ENCODE measurements at regions of chrX and their contacts with region 1.

Region 1: DNA sequence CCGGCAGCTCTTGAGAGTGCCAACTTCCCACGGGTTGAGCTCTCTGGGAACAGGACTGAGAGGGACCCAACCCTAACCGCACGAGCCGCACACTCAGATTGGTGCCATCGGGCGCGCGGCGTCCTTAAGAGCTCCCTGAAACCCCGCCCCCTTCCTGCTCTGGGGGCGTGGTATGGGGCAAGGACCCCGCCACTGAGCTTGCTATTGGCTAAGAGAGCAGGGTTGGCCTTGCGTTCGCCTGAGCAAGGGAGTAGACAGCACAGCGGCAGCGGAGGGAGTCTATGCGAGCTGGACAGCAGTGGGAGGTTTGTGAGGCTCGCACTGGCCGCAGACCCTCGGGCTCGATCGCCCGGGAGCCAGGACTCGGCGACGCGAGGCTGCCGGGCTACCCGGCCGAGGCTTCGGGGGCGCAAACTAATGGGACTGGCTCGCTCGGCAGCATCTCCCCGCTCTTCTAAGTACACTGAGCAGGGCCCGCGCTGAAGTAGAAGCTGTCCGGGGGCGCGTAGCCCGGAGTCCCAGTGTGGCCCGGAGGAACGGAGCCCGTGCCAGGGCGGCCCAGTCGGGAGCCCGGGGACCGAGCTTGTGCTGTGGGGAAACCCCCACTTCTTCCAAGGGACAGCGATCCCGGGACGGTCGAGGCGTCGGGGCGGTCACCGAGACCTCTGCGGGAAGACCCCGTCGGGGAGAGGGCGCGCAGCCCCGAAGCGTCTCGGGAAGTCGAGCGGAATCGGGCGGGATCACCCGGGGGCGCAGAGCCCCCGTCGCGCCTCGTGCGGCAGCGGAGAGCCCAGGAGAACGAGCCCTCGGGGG is at the start of gene EFNB1:
- DNase-seq: peak; percentile 92
- H3K4me3 ChIP-seq: peak within 1 kb of the TSS; percentile 65
- H3K27ac ChIP-seq: peak within 1 kb of the TSS; percentile 74
- H3K4me1 ChIP-seq: no peaks in the 10 kb centered on the region
- H3K27me3 ChIP-seq: no peaks in the 10 kb centered on the region
- CTCF ChIP-seq: no peak
- total RNA-seq, gene EFNB1: 77.9 to 92.2 TPM

Region 2: DNA sequence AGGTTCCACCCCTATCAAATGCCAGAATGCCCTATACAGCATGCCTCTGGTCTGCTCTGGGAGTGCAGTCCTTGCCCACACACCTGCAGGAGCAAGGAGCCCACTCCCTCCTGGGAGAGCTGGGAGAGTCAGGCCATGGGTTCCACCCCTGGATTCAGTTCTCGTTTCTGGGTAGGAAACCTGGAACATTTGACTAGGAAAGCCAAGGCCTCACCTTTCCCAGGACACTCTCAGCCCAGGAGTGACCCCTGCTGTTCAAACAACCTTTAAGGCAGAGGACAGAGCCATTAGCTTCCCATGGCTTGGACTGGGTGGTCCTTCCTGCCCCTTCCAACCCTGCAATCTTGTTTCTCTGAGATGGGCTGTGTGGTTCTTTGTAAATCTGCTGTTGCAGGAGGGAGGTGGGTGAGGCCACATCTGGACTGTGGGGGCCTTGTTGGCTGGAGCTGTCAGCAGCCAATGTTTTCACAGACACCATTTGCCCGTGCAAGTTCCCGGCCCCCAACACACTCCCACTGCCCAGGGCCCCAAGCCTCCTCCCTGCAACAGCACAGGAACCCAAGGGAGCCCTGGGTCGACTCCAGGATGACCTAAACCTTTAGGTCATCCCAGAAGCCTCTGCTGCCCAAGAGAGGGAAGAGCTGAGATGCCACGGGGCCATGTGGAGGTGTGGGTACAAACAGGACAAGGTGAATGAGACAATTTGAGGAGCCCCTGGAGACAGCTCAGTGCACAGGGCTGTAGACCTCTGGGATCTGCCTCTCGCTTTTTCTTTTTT is 231.9 kb after region 1 on chrX:
- intact Hi-C with region 1: loop called (anchors 2 kb)
- DNase-seq: peak; percentile 64
- H3K4me3 ChIP-seq: no peak overlapping the region
- H3K27ac ChIP-seq: no peak overlapping the region
- H3K4me1 ChIP-seq: no peaks in the 10 kb centered on the region
- H3K27me3 ChIP-seq: no peaks in the 10 kb centered on the region
- CTCF ChIP-seq: peak; percentile 15

Region 3: DNA sequence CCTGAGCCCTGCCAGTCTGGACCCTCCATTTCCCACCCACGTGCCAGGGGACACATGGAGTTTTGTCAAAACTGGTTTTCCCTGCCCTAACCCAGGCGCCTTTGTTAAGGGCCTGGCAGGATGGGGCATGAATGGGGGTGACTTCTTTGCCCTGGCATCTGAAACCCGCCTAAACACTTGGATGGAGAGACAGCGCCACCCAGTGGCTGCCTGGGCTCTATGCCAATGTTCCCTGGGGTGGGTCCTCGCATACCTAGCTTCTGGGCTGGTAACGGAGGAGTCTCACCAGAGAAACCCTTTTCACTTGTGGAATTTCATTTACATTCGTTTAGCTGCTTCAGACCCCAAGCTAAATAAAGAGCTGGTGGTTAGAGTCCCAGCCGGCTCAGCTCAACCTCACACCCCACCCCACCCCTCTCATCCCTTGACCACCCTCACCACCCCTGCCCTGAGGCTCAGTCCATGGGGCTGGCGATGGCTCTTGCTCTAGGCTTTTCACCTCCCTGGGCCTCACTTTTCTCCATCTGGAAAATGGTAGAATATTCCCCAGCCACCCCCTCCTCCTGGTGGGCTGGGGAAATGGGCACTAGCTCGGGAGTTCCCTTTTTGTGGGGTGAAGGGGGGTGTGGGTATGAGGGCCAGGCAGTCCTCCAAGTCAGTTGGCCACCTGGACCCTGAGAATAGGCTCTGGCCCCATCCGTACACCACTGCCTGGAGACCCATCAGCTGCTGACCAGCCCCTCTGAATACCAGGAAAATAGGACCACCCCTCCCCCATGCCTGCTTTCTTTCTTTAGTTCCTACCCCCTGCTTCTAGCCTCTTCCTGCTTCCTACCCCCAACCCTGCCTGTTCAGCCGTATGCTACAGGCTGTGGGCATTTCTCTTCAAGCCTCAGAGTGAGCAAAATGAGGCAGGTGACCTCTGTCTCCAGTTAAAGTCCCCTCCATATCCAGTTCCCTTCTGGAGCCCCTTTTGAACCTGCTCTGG is 393.5 kb after region 1 on chrX:
- intact Hi-C with region 1: loop called (anchors 2 kb)
- DNase-seq: peak; percentile 61
- H3K4me3 ChIP-seq: no peak overlapping the region
- H3K27ac ChIP-seq: no peak overlapping the region
- H3K4me1 ChIP-seq: no peaks in the 10 kb centered on the region
- H3K27me3 ChIP-seq: no peaks in the 10 kb centered on the region
- CTCF ChIP-seq: peak; percentile 74

Region 4: DNA sequence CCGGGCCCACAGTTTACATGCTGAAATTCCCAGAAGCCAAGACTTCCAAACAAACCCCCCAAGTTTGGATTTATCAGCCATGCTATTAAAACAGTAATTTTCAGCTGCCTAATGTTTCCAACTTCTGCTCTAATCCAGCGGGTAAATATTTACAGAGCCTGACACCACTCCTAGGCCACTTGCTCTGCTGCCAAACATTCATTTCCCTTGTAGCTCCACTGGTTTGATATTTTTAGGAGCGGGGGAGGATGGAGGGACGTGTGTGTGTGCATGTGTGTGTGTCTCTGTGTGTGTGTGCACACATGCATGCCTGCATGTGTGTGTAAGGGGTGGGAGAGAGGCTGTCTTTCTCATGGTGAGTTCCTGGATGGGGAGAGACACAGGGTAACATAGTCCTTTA is 452.0 kb after region 1 on chrX:
- intact Hi-C with region 1: loop called (anchors 5 kb)
- DNase-seq: no peak
- H3K4me3 ChIP-seq: no peak overlapping the region
- H3K27ac ChIP-seq: no peak overlapping the region
- H3K4me1 ChIP-seq: no peaks in the 10 kb centered on the region
- H3K27me3 ChIP-seq: no peaks in the 10 kb centered on the region
- CTCF ChIP-seq: no peak

Measured in colonic mucosa (tissue), 4 donors.